ENCODE measurements at regions of chr10 and their contacts with region 1.

Region 1: GRCh38 chr10:26157734-26158133 is 58.8 kb upstream of the GAD2 start:
- DNase-seq: no peak
- H3K4me3 ChIP-seq: no peak overlapping the region
- H3K27ac ChIP-seq: no peak overlapping the region
- H3K27me3 ChIP-seq: no peaks in the 10 kb centered on the region
- CTCF ChIP-seq: no peak

Region 2: GRCh38 chr10:26326851-26327250 is 169.1 kb after region 1 on chr10:
- CTCF ChIA-PET with region 1: no interaction called
- POLR2A ChIA-PET with region 1: no interaction called
- DNase-seq: no peak
- H3K4me3 ChIP-seq: no peak overlapping the region
- H3K27ac ChIP-seq: no peak overlapping the region
- H3K27me3 ChIP-seq: no peaks in the 10 kb centered on the region
- CTCF ChIP-seq: no peak

Region 3: GRCh38 chr10:27794157-27794556 is 1636.4 kb after region 1 on chr10:
- CTCF ChIA-PET with region 1: interaction called, 10 read pairs
- POLR2A ChIA-PET with region 1: no interaction called
- DNase-seq: no peak
- H3K4me3 ChIP-seq: no peak overlapping the region
- H3K27ac ChIP-seq: no peak overlapping the region
- H3K27me3 ChIP-seq: no peaks in the 10 kb centered on the region
- CTCF ChIP-seq: peak; percentile 38